Activated CD4-positive, alpha-beta T cell treated with anti-CD3 and anti-CD28 coated beads, Interleukin-2, amount 10 ng/mL, durations not matched to agents 24 days and 14 days (primary cell): ENCODE measurements at regions of chr6 and their contacts with region 1.

Region 1: DNA sequence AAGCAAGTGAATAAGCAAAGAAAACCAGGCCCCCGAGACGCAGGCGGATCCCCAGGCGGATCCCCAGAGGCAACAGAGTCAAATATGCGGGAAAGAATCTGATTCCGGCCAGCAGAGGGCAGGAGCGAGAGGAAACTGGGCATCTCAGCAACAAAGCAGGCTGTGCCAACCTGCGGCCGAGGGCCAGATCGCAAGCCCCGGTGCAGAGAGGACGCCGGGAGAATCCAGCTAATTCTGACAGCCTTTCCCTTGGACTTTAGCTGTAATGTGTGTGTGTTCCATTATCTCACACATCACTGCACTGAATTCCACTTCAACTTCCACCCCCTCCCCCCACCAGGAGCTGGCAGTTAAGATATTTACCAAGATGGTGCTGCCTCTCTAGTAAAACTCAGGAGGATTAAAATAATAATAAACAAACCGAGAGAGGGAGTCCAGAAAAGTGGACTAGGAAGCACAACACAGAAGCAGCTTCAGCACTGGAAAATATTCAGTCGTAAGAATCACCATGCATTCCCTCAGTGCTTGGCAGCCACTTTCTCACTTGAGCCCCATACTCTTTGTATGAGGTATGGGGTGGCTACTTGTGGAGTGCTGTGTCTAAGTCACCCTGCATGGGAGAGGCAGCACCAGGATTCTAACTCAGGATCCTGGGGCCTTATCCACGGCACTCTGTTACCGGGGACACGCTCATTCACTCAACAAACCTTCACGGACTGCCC is 66.2 kb upstream of the SNX9 start:
- DNase-seq: peak; percentile 92
- H3K4me3 Mint-ChIP-seq: peak overlapping the region; percentile 58
- H3K27ac Mint-ChIP-seq: peak overlapping the region; percentile 96
- H3K4me1 Mint-ChIP-seq: peaks cover 82% of the 10 kb centered on the region
- H3K27me3 Mint-ChIP-seq: peaks cover 11% of the 10 kb centered on the region

Region 2: DNA sequence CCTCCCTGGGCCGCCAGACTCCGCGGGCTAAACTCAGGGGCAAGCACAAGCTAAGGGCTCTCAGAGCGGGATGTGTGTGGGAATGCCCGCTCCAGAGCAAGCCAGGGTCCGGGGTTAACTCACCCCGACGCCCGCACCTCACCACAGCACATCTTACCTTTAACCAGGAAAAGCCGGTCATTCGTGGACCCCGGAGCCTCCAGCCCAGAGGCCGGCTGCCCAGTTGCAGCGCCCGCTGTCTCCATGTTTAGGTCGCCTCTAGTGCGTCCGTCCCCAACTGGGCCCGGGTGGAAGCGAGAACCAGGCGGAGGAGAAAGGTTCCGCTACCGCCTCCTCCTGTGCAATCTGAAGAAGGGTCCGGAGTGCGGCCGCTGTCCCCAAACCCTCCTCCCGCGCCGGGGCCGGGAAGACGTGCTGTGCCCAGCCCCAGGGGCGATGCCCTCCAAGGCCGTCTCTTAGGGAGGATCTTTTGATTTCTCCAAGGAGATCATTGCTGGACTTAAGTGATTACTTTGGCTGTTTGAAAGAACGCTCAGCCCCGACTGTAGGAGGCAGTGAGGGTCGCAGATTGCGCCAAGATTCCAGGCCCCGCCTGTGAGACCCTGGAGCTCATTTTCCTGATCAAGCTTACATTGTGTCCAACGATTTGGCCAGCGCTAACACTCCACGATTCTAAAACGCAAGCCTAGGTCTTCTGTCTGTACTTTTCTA is 433.5 kb before region 1 on chr6 and contains the start of gene TMEM242:
- intact Hi-C with region 1: loop called (anchors 2 kb)
- DNase-seq: peak; percentile 97
- H3K4me3 Mint-ChIP-seq: peak within 1 kb of the TSS; percentile 94
- H3K27ac Mint-ChIP-seq: peak within 1 kb of the TSS; percentile 92
- H3K4me1 Mint-ChIP-seq: peaks cover 39% of the 10 kb centered on the region
- H3K27me3 Mint-ChIP-seq: peaks cover 21% of the 10 kb centered on the region
- total RNA-seq, gene TMEM242: 10.1 and 10.7 TPM in 2 replicates

Region 3: DNA sequence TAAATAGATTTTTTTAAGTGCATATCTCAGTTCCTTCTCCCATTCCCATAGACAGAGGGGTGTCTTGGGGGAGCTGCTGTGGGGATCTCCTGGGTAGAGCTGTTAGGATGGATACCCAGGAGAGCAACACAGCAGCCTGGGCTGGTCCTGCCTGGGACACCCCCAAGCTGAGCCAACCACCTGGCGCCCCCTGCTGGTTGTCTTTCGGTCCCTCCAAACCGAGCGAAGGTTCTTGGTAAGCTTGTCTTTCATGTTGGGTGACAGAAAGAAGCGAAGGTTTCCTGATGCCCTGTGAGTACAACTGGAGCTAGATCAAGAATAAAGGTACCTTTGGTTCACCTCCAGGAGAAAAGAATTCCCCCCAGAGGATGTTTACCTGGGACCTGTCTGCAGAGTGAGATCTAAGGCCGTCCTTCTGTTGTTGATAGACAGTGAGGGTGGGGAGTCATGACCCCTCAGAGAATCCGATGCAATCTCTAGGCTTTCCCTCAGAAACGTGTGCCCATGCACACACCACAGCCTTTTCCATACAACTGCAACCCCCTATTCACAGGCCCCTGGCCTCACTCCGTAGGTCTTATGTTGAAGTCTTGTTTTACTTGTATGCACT is 117.0 kb after region 1 on chr6:
- intact Hi-C with region 1: loop called (anchors 1 kb)
- DNase-seq: peak; percentile 95
- H3K4me3 Mint-ChIP-seq: no peak overlapping the region
- H3K27ac Mint-ChIP-seq: no peak overlapping the region
- H3K4me1 Mint-ChIP-seq: peaks cover 19% of the 10 kb centered on the region
- H3K27me3 Mint-ChIP-seq: no peaks in the 10 kb centered on the region

Region 4: GRCh38 chr6:158072083-158072721 is 315.3 kb after region 1 on chr6:
- intact Hi-C with region 1: loop called (anchors 1 kb)
- DNase-seq: peak; percentile 90
- H3K4me3 Mint-ChIP-seq: no peak overlapping the region
- H3K27ac Mint-ChIP-seq: peak overlapping the region; percentile 19
- H3K4me1 Mint-ChIP-seq: peaks cover 33% of the 10 kb centered on the region
- H3K27me3 Mint-ChIP-seq: no peaks in the 10 kb centered on the region

Region 5: DNA sequence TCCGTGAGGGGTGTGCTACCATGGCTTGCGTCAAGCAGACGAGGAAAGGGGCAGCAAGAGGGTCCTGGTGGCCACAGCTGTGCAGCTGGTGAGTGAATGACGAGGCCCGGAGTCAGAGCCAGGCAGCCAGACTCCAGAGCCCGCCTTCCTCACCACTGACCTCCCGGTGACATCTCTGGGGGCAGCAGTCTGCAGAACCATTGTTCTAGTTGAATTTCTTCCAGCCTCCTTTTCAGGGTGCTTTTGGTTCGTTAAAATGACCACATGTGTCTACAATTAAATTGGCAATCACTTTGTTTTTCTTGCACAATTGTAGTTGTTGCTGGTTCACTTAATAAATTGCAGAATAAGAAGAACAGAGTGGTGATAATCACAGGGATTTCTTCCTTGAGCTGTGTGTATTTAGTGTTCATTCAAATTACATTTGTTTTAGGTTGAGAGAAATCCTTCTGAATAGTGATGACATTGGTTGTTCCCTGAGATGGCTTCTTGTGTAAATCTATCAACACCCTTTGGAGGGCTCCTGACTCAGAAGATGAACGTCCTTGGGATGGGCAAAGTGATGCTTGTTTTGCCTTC is 651.8 kb after region 1 on chr6:
- intact Hi-C with region 1: no loop called
- DNase-seq: no peak
- H3K4me3 Mint-ChIP-seq: no peak overlapping the region
- H3K27ac Mint-ChIP-seq: no peak overlapping the region
- H3K4me1 Mint-ChIP-seq: no peaks in the 10 kb centered on the region
- H3K27me3 Mint-ChIP-seq: no peaks in the 10 kb centered on the region